Natural killer cell (primary cell): ENCODE measurements at regions of chr17 and their contacts with region 1.

Region 1: GRCh38 chr17:38868817-38869525 is 887 bp upstream of the LASP1 start:
- DNase-seq: peak; percentile 88 to 89
- ATAC-seq: peak; percentile 46 to 71 (median 65)
- H3K4me3 ChIP-seq: peak overlapping the region; percentile 100
- H3K4me3 Mint-ChIP-seq: peak overlapping the region; percentile 100
- H3K27ac ChIP-seq: peak overlapping the region; percentile 88
- H3K27ac Mint-ChIP-seq: peak overlapping the region; percentile 96 to 98
- H3K4me1 ChIP-seq: peaks cover 48% of the 10 kb centered on the region
- H3K4me1 Mint-ChIP-seq: peaks cover 44 to 59% of the 10 kb centered on the region in 2 donors
- H3K27me3 ChIP-seq: no peaks in the 10 kb centered on the region
- H3K27me3 Mint-ChIP-seq: no peaks in the 10 kb centered on the region
- CTCF ChIP-seq: no peak

Region 2: GRCh38 chr17:38702166-38702899 is 166.6 kb before region 1 on chr17:
- intact Hi-C with region 1: loop called (anchors 5 kb)
- DNase-seq: peak; percentile 76 to 89
- ATAC-seq: peak; percentile 17 to 66 (median 48)
- H3K4me3 ChIP-seq: peak overlapping the region; percentile 77
- H3K4me3 Mint-ChIP-seq: peak overlapping the region; percentile 98
- H3K27ac ChIP-seq: peak overlapping the region; percentile 95
- H3K27ac Mint-ChIP-seq: peak overlapping the region; percentile 98 to 100
- H3K4me1 ChIP-seq: peaks cover 57% of the 10 kb centered on the region
- H3K4me1 Mint-ChIP-seq: peaks cover 44 to 72% of the 10 kb centered on the region in 2 donors
- H3K27me3 ChIP-seq: no peaks in the 10 kb centered on the region
- H3K27me3 Mint-ChIP-seq: no peaks in the 10 kb centered on the region
- CTCF ChIP-seq: no peak

Region 3: GRCh38 chr17:38824899-38825761 is 43.8 kb before region 1 on chr17 and contains the start of gene CWC25:
- intact Hi-C with region 1: loop called (anchors 1 kb)
- DNase-seq: peak; percentile 98 to 100
- ATAC-seq: peak; percentile 85 to 90 (median 85)
- H3K4me3 ChIP-seq: peak within 1 kb of the TSS; percentile 80
- H3K4me3 Mint-ChIP-seq: peak within 1 kb of the TSS; percentile 94
- H3K27ac ChIP-seq: peak within 1 kb of the TSS; percentile 89
- H3K27ac Mint-ChIP-seq: peak within 1 kb of the TSS; percentile 97 to 100
- H3K4me1 ChIP-seq: peaks cover 18% of the 10 kb centered on the region
- H3K4me1 Mint-ChIP-seq: peaks cover 27 to 39% of the 10 kb centered on the region in 2 donors
- H3K27me3 ChIP-seq: no peaks in the 10 kb centered on the region
- H3K27me3 Mint-ChIP-seq: no peaks in the 10 kb centered on the region
- CTCF ChIP-seq: no peak
- total RNA-seq, gene CWC25: 63.8 to 79.4 (median 74.4) TPM

Region 4: DNA sequence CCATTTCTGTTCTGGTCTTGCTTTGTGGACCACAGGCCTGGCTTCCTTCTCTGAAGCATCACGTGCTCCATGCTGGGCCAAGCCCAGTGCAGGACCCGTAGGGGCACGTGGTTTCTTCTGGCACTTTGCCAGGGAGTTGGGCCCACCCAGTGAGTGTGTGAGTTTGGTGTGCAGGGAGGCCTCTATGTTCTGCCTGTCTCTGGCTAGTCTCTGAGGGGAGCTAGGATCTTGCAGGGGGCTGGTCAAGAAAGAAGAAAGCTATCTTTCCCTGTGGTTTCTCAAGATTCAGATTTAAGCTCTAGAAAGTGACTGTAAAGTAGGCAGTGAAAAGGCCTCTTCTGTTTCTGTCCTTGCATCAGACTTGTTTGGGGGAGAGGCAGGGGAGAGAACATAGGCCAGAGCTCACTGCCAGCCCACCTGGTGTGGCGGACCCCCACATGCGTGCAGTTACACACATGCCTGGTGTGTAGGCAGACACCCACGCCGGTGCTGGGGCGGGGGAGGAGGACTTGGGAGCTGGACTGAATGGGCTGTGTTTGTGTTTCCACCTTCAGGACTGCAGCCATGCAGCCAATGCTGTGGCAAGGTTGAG is 12.7 kb after region 1 on chr17:
- intact Hi-C with region 1: loop called (anchors 1 kb)
- DNase-seq: peak in 1 of 2 donors; percentile 57
- ATAC-seq: peak; percentile 30 to 57 (median 38)
- H3K4me3 ChIP-seq: no peak overlapping the region
- H3K4me3 Mint-ChIP-seq: peak overlapping the region; percentile 82
- H3K27ac ChIP-seq: peak overlapping the region; percentile 45
- H3K27ac Mint-ChIP-seq: peak overlapping the region; percentile 91 to 98
- H3K4me1 ChIP-seq: peaks cover 100% of the 10 kb centered on the region
- H3K4me1 Mint-ChIP-seq: peaks cover 83 to 91% of the 10 kb centered on the region in 2 donors
- H3K27me3 ChIP-seq: no peaks in the 10 kb centered on the region
- H3K27me3 Mint-ChIP-seq: no peaks in the 10 kb centered on the region
- CTCF ChIP-seq: no peak

Region 5: DNA sequence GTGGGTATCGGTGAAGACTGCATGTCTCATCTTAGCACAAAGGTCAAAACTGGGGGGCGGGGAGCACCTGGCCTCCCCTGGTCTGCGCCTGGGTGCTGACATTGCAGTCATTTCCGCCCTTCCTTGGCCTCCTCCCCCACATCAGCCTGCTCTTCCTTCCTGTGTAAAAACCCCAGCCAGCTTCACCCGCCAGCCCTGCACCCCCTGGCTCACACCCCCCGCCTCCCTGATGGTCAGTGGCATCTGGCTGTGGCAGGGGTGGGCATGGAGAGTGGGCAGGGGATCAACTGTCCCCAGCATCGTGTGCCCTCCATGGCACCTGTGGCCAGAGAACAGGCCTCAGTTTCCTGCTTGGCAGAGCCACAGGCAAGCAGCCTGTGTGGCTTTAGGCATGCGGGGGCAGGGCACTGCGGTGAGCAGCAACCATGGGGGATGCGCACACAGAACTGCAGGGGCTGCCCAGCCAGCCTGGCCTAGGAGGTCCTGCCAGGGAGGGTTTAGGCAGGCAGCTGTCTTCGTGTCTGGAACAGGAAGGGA is 29.9 kb after region 1 on chr17:
- intact Hi-C with region 1: loop called (anchors 1 kb)
- DNase-seq: peak; percentile 81 to 91
- ATAC-seq: peak; percentile 75 to 86 (median 78)
- H3K4me3 ChIP-seq: peak overlapping the region; percentile 14
- H3K4me3 Mint-ChIP-seq: peak overlapping the region; percentile 87
- H3K27ac ChIP-seq: peak overlapping the region; percentile 93
- H3K27ac Mint-ChIP-seq: peak overlapping the region; percentile 95
- H3K4me1 ChIP-seq: peaks cover 97% of the 10 kb centered on the region
- H3K4me1 Mint-ChIP-seq: peaks cover 62 to 72% of the 10 kb centered on the region in 2 donors
- H3K27me3 ChIP-seq: no peaks in the 10 kb centered on the region
- H3K27me3 Mint-ChIP-seq: no peaks in the 10 kb centered on the region
- CTCF ChIP-seq: no peak

Region 6: GRCh38 chr17:38912221-38912813 is 43.3 kb after region 1 on chr17:
- intact Hi-C with region 1: no loop called
- DNase-seq: peak; percentile 2 to 14
- ATAC-seq: no peak
- H3K4me3 ChIP-seq: no peak overlapping the region
- H3K4me3 Mint-ChIP-seq: peak overlapping the region; percentile 57
- H3K27ac ChIP-seq: peak overlapping the region; percentile 36
- H3K27ac Mint-ChIP-seq: peak overlapping the region; percentile 81 to 84
- H3K4me1 ChIP-seq: peaks cover 78% of the 10 kb centered on the region
- H3K4me1 Mint-ChIP-seq: peaks cover 49 to 73% of the 10 kb centered on the region in 2 donors
- H3K27me3 ChIP-seq: no peaks in the 10 kb centered on the region
- H3K27me3 Mint-ChIP-seq: no peaks in the 10 kb centered on the region
- CTCF ChIP-seq: no peak

Region 7: GRCh38 chr17:39001703-39002637 is 133.0 kb after region 1 on chr17:
- intact Hi-C with region 1: no loop called
- DNase-seq: no peak
- ATAC-seq: no peak
- H3K4me3 ChIP-seq: no peak overlapping the region
- H3K4me3 Mint-ChIP-seq: no peak overlapping the region
- H3K27ac ChIP-seq: no peak overlapping the region
- H3K27ac Mint-ChIP-seq: no peak overlapping the region
- H3K4me1 ChIP-seq: peaks cover 11% of the 10 kb centered on the region
- H3K4me1 Mint-ChIP-seq: peaks cover 12 to 21% of the 10 kb centered on the region in 2 donors
- H3K27me3 ChIP-seq: no peaks in the 10 kb centered on the region
- H3K27me3 Mint-ChIP-seq: peaks cover 0 to 21% of the 10 kb centered on the region in 2 donors
- CTCF ChIP-seq: no peak

Region 8: GRCh38 chr17:39153599-39154051 is 284.7 kb after region 1 on chr17:
- intact Hi-C with region 1: loop called (anchors 5 kb)
- DNase-seq: peak; percentile 92 to 96
- ATAC-seq: peak; percentile 63 to 76 (median 64)
- H3K4me3 ChIP-seq: peak overlapping the region; percentile 91
- H3K4me3 Mint-ChIP-seq: peak overlapping the region; percentile 100
- H3K27ac ChIP-seq: peak overlapping the region; percentile 55
- H3K27ac Mint-ChIP-seq: peak overlapping the region; percentile 100
- H3K4me1 ChIP-seq: peaks cover 35% of the 10 kb centered on the region
- H3K4me1 Mint-ChIP-seq: peaks cover 41 to 48% of the 10 kb centered on the region in 2 donors
- H3K27me3 ChIP-seq: peaks cover 12% of the 10 kb centered on the region
- H3K27me3 Mint-ChIP-seq: peaks cover 18 to 21% of the 10 kb centered on the region in 2 donors
- CTCF ChIP-seq: no peak

Region 9: GRCh38 chr17:39270923-39271322 is 402.0 kb after region 1 on chr17:
- intact Hi-C with region 1: no loop called
- DNase-seq: no peak
- ATAC-seq: no peak
- H3K4me3 ChIP-seq: no peak overlapping the region
- H3K4me3 Mint-ChIP-seq: no peak overlapping the region
- H3K27ac ChIP-seq: no peak overlapping the region
- H3K27ac Mint-ChIP-seq: no peak overlapping the region
- H3K4me1 ChIP-seq: no peaks in the 10 kb centered on the region
- H3K4me1 Mint-ChIP-seq: no peaks in the 10 kb centered on the region
- H3K27me3 ChIP-seq: no peaks in the 10 kb centered on the region
- H3K27me3 Mint-ChIP-seq: no peaks in the 10 kb centered on the region
- CTCF ChIP-seq: no peak